ENCODE measurements at regions of chr3 and their contacts with region 1.

Region 1: GRCh38 chr3:124281453-124282316 is 289.8 kb upstream of the ROPN1 start:
- DNase-seq: no peak
- ATAC-seq: peak; percentile 67
- H3K4me3 ChIP-seq: no peak overlapping the region
- H3K27ac ChIP-seq: no peak overlapping the region
- H3K4me1 ChIP-seq: peaks cover 7% of the 10 kb centered on the region in 2 donors
- H3K27me3 ChIP-seq: no peaks in the 10 kb centered on the region
- CTCF ChIP-seq: peak; percentile 14 to 32

Region 2: DNA sequence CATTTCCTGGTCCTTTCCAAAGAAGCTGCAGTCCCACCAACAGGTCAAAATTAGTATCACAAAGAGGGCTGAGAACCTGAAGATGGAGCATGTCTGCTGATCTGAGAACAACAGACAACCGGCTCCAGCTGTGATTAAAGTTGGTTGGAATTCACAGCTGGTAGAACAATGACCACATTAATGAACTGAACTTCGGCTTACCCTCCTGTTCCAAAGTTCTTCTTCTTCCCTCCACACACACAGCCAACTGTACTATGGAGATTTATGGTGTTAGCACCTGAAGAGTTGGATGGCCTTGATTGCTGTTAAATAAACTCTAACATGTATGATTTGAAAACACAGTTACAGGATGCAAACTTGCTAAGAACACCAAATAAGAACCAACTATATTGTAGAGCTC is 262.4 kb before region 1 on chr3:
- intact Hi-C with region 1: loop called in 1 of 2 experiments (anchors 5 kb)
- DNase-seq: no peak
- ATAC-seq: no peak
- H3K4me3 ChIP-seq: no peak overlapping the region
- H3K27ac ChIP-seq: no peak overlapping the region
- H3K4me1 ChIP-seq: no peaks in the 10 kb centered on the region
- H3K27me3 ChIP-seq: no peaks in the 10 kb centered on the region
- CTCF ChIP-seq: no peak

Measured in left lung (tissue), 14 donors.